Naive thymus-derived CD4-positive, alpha-beta T cell (primary cell): ENCODE measurements at regions of chr5 and their contacts with region 1.

Region 1: GRCh38 chr5:140244525-140245025 is 58.3 kb downstream of the PFDN1 start:
- DNase-seq: peak; percentile 62 to 82 (median 74)
- ATAC-seq: peak; percentile 87
- H3K4me3 ChIP-seq: no peak overlapping the region
- H3K4me3 Mint-ChIP-seq: peak overlapping the region in 6 of 10 donors; percentile 0 to 55 (median 44)
- H3K27ac ChIP-seq: no peak overlapping the region
- H3K27ac Mint-ChIP-seq: peak overlapping the region in 8 of 9 donors; percentile 41 to 94 (median 77)
- H3K4me1 ChIP-seq: peaks cover 0 to 14% of the 10 kb centered on the region in 2 donors
- H3K4me1 Mint-ChIP-seq: peaks cover 5 to 43% (median 27%) of the 10 kb centered on the region in 7 donors
- H3K27me3 ChIP-seq: no peaks in the 10 kb centered on the region
- H3K27me3 Mint-ChIP-seq: no peaks in the 10 kb centered on the region

Region 2: DNA sequence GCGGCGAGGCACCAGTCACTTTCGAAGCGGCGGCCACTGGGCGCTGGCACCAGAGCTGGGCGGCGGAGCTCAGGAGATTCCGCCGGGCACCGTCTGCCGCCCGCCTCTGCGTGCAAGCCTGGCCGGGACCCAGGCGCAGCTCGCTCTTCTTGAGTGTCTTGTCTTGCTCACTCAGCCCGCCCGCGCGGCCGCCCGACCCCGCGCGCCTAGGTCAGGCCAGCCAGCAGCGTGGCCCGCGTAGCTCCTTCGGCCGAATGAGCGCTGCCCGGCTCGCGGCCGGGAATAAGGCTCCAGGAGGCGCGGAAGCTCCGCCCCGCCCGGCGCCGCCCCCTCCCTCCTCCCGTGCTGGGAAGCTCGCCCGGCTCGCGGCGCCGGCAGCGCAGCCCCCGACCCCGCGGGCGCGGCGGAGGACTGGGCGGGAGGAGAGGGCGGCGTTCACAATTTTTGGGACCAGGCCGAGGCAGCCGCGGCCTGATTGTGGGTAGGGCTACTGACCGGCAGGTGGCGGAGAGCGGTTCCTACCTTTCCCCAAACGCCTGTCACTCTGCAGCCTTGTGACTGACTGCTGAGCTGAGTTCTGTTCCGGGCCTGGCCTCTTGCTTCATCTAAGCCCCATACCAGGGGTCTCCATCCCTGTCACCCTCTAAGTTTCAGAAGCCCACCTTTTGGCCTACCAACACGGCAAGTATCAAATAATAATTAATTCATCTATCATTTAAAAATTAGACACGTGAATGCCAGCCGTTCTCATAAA is 102.0 kb after region 1 on chr5 and contains the start of gene HBEGF:
- CTCF ChIA-PET with region 1: interaction called, 262 read pairs
- POLR2A ChIA-PET with region 1: interaction called, 4 read pairs
- intact Hi-C with region 1: loop called (anchors 1 kb)
- DNase-seq: peak; percentile 19 to 74 (median 42)
- ATAC-seq: peak; percentile 73
- H3K4me3 ChIP-seq: peak within 1 kb of the TSS; percentile 49
- H3K4me3 Mint-ChIP-seq: peak within 1 kb of the TSS; percentile 73 to 91 (median 84)
- H3K27ac ChIP-seq: peak within 1 kb of the TSS; percentile 57
- H3K27ac Mint-ChIP-seq: peak within 1 kb of the TSS in 8 of 9 donors; percentile 33 to 94 (median 62)
- H3K4me1 ChIP-seq: peaks cover 10 to 40% of the 10 kb centered on the region in 2 donors
- H3K4me1 Mint-ChIP-seq: peaks cover 33 to 68% (median 52%) of the 10 kb centered on the region in 7 donors
- H3K27me3 ChIP-seq: no peaks in the 10 kb centered on the region
- H3K27me3 Mint-ChIP-seq: peaks cover 0 to 17% (median 5%) of the 10 kb centered on the region in 5 donors
- total RNA-seq, gene HBEGF: 0.35 to 95.5 (median 11.6) TPM

Region 3: DNA sequence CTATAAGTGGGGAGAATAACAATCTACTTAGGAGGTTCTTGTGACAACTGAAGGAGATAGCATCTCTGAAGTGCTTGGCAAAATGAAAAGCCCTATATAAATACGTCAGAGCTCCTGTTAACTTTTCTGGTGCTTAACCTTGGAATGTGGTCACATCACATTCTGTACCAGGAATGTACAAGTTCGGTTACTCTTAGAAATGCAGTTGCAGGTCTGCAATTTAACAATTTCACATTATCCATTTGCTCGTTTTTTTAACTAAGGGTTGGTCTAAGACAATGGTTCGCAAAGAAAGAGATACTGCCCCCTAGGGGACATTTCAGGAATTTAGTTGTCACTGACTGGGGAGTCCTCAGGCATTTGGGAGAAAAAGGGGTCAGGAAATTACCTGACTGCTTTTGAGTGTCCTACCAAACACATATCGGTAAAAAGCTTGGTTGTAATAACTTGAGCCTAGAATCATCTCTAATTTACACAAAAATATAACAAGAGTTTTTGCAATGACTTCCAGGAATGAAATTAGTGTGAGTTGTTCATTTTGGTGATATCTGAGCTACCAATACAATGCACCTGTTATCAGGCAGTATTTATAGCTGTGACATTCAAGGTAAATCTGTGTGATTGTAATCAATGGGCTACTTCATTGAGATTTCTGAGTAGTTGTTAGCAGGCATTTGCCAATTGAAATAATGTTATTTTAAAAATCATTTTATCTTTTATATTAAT is 107.2 kb after region 1 on chr5:
- CTCF ChIA-PET with region 1: interaction called, 262 read pairs
- POLR2A ChIA-PET with region 1: interaction called, 4 read pairs
- intact Hi-C with region 1: loop called (anchors 1 kb)
- DNase-seq: peak in 8 of 9 donors; percentile 52 to 86 (median 78)
- ATAC-seq: peak; percentile 91
- H3K4me3 ChIP-seq: no peak overlapping the region
- H3K4me3 Mint-ChIP-seq: peak overlapping the region in 5 of 10 donors; percentile 8 to 54 (median 29)
- H3K27ac ChIP-seq: no peak overlapping the region
- H3K27ac Mint-ChIP-seq: peak overlapping the region in 4 of 9 donors; percentile 0 to 41 (median 18)
- H3K4me1 ChIP-seq: peaks cover 0 to 12% of the 10 kb centered on the region in 2 donors
- H3K4me1 Mint-ChIP-seq: peaks cover 4 to 39% (median 14%) of the 10 kb centered on the region in 7 donors
- H3K27me3 ChIP-seq: no peaks in the 10 kb centered on the region
- H3K27me3 Mint-ChIP-seq: peaks cover 0 to 13% (median 5%) of the 10 kb centered on the region in 5 donors

Region 4: GRCh38 chr5:140672455-140673186 is 428.0 kb after region 1 on chr5:
- CTCF ChIA-PET with region 1: no interaction called
- POLR2A ChIA-PET with region 1: no interaction called
- intact Hi-C with region 1: no loop called
- DNase-seq: peak in 1 of 9 donors; percentile 19
- ATAC-seq: peak; percentile 35
- H3K4me3 ChIP-seq: no peak overlapping the region
- H3K4me3 Mint-ChIP-seq: no peak overlapping the region
- H3K27ac ChIP-seq: no peak overlapping the region
- H3K27ac Mint-ChIP-seq: no peak overlapping the region
- H3K4me1 ChIP-seq: peaks cover 0 to under 1% of the 10 kb centered on the region in 2 donors
- H3K4me1 Mint-ChIP-seq: peaks cover 3 to 12% (median 7%) of the 10 kb centered on the region in 7 donors
- H3K27me3 ChIP-seq: no peaks in the 10 kb centered on the region
- H3K27me3 Mint-ChIP-seq: no peaks in the 10 kb centered on the region

Region 5: DNA sequence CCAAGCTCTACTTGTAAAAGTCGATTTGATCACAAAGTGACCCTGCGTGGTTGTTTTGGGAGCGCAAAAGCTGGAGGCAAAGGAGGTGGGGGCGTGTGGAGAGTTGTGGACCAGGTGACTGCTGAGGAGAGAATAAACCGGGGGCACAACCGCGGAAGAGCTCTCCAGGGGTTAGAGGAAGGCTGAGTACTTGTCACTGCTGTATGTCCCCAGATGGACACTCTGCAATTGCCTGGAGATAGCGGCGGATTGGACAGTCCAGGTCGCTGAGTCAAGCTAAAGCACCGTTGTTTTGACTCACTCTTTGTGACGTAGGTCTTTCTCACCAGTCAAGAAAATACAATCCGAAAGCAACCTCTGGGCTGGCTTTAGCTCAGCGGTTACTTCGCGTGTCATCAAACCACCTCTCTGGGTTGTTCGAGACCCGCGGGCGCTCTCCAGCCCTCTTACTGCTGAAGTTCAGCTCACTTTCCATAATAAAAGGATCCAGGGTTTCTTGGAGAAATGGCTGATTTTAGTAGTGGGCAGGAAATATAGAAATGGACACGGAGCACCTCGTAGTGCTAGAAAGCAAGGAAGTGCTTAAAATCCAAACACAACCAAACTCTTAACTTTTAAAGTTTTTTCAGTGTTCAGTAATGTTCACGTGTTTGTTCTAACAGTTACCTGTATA is 481.4 kb after region 1 on chr5:
- CTCF ChIA-PET with region 1: interaction called, 3 read pairs
- POLR2A ChIA-PET with region 1: no interaction called
- intact Hi-C with region 1: loop called (anchors 5 kb)
- DNase-seq: peak; percentile 9 to 80 (median 45)
- ATAC-seq: peak; percentile 93
- H3K4me3 ChIP-seq: peak overlapping the region; percentile 40
- H3K4me3 Mint-ChIP-seq: peak overlapping the region; percentile 37 to 81 (median 68)
- H3K27ac ChIP-seq: no peak overlapping the region
- H3K27ac Mint-ChIP-seq: peak overlapping the region in 7 of 9 donors; percentile 51 to 93 (median 77)
- H3K4me1 ChIP-seq: no peaks in the 10 kb centered on the region
- H3K4me1 Mint-ChIP-seq: peaks cover 0 to 22% (median 17%) of the 10 kb centered on the region in 7 donors
- H3K27me3 ChIP-seq: peaks cover 0 to 4% of the 10 kb centered on the region in 2 donors
- H3K27me3 Mint-ChIP-seq: peaks cover 26 to 49% (median 35%) of the 10 kb centered on the region in 5 donors